Activated B cell treated with CpG ODN at 0.5 μM for 24 hours (primary cell): ENCODE measurements at regions of chr11 and their contacts with region 1.

Region 1: GRCh38 chr11:5123802-5124521 is 14.2 kb downstream of the OR52A5 start:
- DNase-seq: no peak
- ATAC-seq: peak; percentile 45
- H3K4me3 Mint-ChIP-seq: no peak overlapping the region
- H3K27ac Mint-ChIP-seq: no peak overlapping the region
- H3K4me1 Mint-ChIP-seq: no peaks in the 10 kb centered on the region
- H3K27me3 Mint-ChIP-seq: peaks cover 4% of the 10 kb centered on the region
- CTCF ChIP-seq: no peak

Region 2: DNA sequence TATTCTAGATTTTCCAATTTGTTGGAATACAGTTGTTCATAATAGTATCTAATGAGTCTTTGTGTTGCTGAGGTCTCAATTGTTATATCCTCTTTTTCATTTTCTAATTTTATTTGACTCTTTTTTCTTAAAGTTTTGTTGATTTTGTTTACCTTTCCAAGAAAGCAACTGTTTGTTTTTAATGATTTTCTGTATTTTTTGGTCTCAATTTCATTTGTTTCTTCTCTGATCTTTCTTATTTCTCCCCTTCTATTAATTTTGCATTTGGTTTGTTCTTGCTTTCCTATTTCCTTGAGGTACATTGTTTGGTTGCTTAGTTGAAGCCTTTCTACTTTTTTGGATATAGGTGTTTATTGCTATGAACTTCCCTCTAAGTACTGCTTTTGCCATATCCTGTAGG is 35.8 kb after region 1 on chr11:
- CTCF ChIA-PET with region 1: no interaction called
- POLR2A ChIA-PET with region 1: no interaction called
- intact Hi-C with region 1: no loop called
- DNase-seq: no peak
- ATAC-seq: no peak
- H3K4me3 Mint-ChIP-seq: no peak overlapping the region
- H3K27ac Mint-ChIP-seq: no peak overlapping the region
- H3K4me1 Mint-ChIP-seq: no peaks in the 10 kb centered on the region
- H3K27me3 Mint-ChIP-seq: no peaks in the 10 kb centered on the region
- CTCF ChIP-seq: no peak

Region 3: DNA sequence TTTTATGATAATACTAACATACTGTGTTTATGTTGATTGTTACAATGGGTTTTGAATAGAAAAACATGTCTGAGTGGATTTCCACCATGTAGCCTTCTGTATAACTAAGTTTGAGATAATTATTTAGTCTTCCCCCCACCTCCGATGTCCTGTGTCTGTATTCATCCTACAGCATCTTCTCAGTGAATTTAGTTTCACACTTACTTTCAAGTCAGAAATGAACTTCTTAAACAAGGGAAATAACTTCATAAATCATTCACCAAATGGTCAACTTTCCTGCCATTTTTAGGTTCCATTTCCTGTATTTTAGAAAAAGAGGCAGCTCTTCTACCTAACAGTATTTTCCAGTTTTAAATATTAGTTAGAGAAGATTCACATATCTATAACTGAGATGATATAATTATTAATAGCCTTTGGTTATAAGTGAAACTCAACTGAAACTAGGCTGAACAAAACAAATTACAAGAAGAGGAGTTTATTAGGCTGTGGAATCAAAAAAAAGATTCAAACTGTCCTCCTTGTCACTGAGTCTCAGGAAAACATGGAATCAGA is 215.9 kb after region 1 on chr11:
- CTCF ChIA-PET with region 1: no interaction called
- POLR2A ChIA-PET with region 1: no interaction called
- intact Hi-C with region 1: no loop called
- DNase-seq: no peak
- ATAC-seq: no peak
- H3K4me3 Mint-ChIP-seq: no peak overlapping the region
- H3K27ac Mint-ChIP-seq: no peak overlapping the region
- H3K4me1 Mint-ChIP-seq: no peaks in the 10 kb centered on the region
- H3K27me3 Mint-ChIP-seq: peaks cover 5% of the 10 kb centered on the region
- CTCF ChIP-seq: no peak

Region 4: DNA sequence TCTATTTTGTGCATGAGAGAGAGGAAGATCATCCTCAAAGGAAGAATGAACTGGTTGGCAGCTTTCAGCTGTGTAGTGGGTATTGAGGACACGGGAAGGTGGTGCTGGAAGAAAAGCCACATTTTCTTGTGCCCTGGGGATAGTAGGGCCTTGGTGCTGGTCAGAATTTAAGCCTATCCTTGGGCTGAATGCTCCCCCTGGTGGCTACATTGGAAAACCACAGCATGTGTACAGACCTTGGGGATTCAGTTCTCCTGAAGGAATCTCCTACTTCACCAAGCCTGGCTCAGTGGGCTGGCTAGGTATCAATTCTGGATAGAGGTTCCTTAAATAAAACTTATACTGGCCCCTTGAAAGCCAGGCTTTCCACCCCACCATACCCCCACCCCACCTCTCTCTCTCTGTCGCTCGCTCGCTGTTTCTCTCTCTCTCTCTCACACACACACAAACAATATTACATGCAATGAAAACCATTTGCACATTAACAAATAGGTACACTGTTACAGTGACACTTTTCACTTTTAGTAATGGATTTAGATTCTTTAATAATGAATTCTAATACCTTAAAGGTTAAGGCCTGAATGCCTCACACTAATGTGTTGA is 256.9 kb after region 1 on chr11:
- CTCF ChIA-PET with region 1: no interaction called
- POLR2A ChIA-PET with region 1: no interaction called
- intact Hi-C with region 1: loop called (anchors 1 kb)
- DNase-seq: no peak
- ATAC-seq: no peak
- H3K4me3 Mint-ChIP-seq: no peak overlapping the region
- H3K27ac Mint-ChIP-seq: no peak overlapping the region
- H3K4me1 Mint-ChIP-seq: no peaks in the 10 kb centered on the region
- H3K27me3 Mint-ChIP-seq: no peaks in the 10 kb centered on the region
- CTCF ChIP-seq: no peak

Region 5: GRCh38 chr11:5476184-5476819 is 352.3 kb after region 1 on chr11:
- CTCF ChIA-PET with region 1: no interaction called
- POLR2A ChIA-PET with region 1: no interaction called
- intact Hi-C with region 1: loop called (anchors 10 kb)
- DNase-seq: no peak
- ATAC-seq: peak; percentile 52
- H3K4me3 Mint-ChIP-seq: no peak overlapping the region
- H3K27ac Mint-ChIP-seq: no peak overlapping the region
- H3K4me1 Mint-ChIP-seq: no peaks in the 10 kb centered on the region
- H3K27me3 Mint-ChIP-seq: peaks cover 13% of the 10 kb centered on the region
- CTCF ChIP-seq: no peak